ENCODE measurements at regions of chr19 and their contacts with region 1.

Region 1: DNA sequence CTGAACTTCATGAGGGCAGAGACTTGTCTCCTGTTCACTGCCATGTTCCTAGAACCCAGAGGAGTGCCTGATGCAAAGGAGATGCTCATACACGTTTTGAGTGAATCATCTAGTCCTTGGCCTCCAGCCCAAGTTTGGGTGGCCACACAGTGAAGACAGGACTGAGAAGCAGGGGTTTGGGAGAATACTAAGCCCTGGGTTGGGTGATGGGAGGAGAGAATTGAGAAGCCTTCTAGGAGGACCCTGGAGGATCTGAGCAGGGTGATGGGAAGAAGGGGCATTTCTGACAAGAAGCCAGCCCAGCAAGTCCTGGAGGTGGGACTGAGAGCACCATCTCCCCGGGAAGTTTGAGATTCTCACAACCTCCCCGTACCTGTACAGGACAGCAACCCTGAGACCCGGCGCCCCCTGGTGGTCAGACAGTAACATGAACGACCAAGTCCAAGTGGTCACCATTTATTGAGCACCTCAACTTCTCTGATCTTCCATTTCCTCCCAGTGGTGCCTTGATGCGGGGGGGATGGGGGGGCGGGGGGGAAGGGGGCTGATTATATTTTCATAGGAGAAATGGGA is 11.0 kb downstream of the CTU1 start:
- DNase-seq: peak in 1 of 2 experiments; percentile 89
- H3K4me3 ChIP-seq: no peak overlapping the region
- H3K27ac ChIP-seq: no peak overlapping the region
- H3K4me1 ChIP-seq: peaks cover 0 to 6% (median 2%) of the 10 kb centered on the region in 4 experiments; a peak in 4 of 7 replicates
- H3K27me3 ChIP-seq: no peaks in the 10 kb centered on the region; a peak in 1 of 7 replicates
- CTCF ChIP-seq: peak; percentile 69 to 74 (median 70)
- EP300 ChIP-seq: no peak
- POLR2A ChIP-seq: no peak
- RAD21 ChIP-seq: peak; percentile 55 to 66

Region 2: GRCh38 chr19:50922317-50922853 is 174.9 kb before region 1 on chr19:
- CTCF ChIA-PET with region 1: interaction called, 18 read pairs
- POLR2A ChIA-PET with region 1: interaction called, 3 read pairs
- DNase-seq: peak; percentile 59 to 87
- H3K4me3 ChIP-seq: 0 out of 8 replicates have a peak overlapping the region, but pooled peaks of 1 of the 4 experiments have one; percentile 0
- H3K27ac ChIP-seq: no peak overlapping the region
- H3K4me1 ChIP-seq: peaks cover 0 to 7% (median 5%) of the 10 kb centered on the region in 4 experiments; a peak in 5 of 7 replicates
- H3K27me3 ChIP-seq: 0 out of 7 replicates have a peak, but pooled peaks cover 0 to 2% (median 0%) of the 10 kb centered on the region in 4 experiments
- CTCF ChIP-seq: peak; percentile 83 to 98 (median 90)
- EP300 ChIP-seq: no peak
- POLR2A ChIP-seq: no peak
- RAD21 ChIP-seq: peak; percentile 96 to 98

Region 3: GRCh38 chr19:50947123-50947522 is 150.1 kb before region 1 on chr19:
- CTCF ChIA-PET with region 1: interaction called, 14 read pairs
- POLR2A ChIA-PET with region 1: no interaction called
- DNase-seq: no peak
- H3K4me3 ChIP-seq: no peak overlapping the region
- H3K27ac ChIP-seq: no peak overlapping the region
- H3K4me1 ChIP-seq: peaks cover 0 to 2% (median 0%) of the 10 kb centered on the region in 4 experiments; a peak in 1 of 7 replicates
- H3K27me3 ChIP-seq: peaks cover 0 to 3% (median 0%) of the 10 kb centered on the region in 4 experiments; a peak in 1 of 7 replicates
- CTCF ChIP-seq: no peak
- EP300 ChIP-seq: no peak
- POLR2A ChIP-seq: no peak
- RAD21 ChIP-seq: no peak

Region 4: GRCh38 chr19:51031220-51031879 is 65.9 kb before region 1 on chr19:
- CTCF ChIA-PET with region 1: interaction called, 269 read pairs
- POLR2A ChIA-PET with region 1: interaction called, 4 read pairs
- DNase-seq: no peak
- H3K4me3 ChIP-seq: no peak overlapping the region
- H3K27ac ChIP-seq: no peak overlapping the region
- H3K4me1 ChIP-seq: peaks cover 0 to 16% (median 8%) of the 10 kb centered on the region in 4 experiments; a peak in 5 of 7 replicates
- H3K27me3 ChIP-seq: no peaks in the 10 kb centered on the region; a peak in 1 of 7 replicates
- CTCF ChIP-seq: no peak
- EP300 ChIP-seq: no peak
- POLR2A ChIP-seq: no peak
- RAD21 ChIP-seq: no peak

Region 5: DNA sequence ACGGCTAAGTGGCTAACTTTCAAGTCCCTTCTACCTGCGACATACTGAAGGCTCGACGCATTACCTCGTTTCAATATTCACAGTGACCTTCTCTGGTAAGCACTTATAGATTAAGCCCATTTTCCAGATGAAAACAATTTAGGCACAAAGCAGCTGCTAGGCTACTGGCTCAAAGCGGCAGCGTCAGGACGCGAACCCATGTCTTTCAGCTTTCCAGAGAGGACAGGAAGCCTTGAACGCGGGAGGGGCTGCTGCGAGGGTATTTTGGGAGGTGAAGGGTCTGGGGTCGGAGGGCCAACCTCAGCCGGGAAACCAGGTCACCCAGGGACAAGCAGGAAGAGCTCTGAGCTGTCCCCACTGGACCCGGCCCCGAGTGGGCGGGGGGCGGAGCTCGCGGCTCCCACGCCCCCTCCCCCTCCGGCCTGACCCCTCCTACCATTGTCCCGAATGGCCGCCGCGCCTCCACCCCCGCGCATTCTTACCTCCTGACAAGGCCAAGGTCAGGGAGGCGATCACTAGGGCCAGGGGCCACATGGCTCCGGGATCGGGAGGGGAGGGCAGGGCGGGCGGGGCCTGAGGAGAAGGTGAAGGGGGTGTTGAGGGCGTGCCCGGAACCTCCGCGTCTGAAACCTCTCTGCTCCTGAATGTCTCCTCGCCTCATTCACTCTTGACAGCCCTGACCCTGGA is 32.6 kb before region 1 on chr19 and contains the start of gene KLK13:
- CTCF ChIA-PET with region 1: interaction called, 13 read pairs
- POLR2A ChIA-PET with region 1: no interaction called
- DNase-seq: peak; percentile 50 to 69
- H3K4me3 ChIP-seq: peak within 1 kb of the TSS; percentile 55 to 64 (median 62)
- H3K27ac ChIP-seq: no peak within 1 kb of the TSS
- H3K4me1 ChIP-seq: peaks cover 0 to 9% (median 1%) of the 10 kb centered on the region in 4 experiments; a peak in 4 of 7 replicates
- H3K27me3 ChIP-seq: no peaks in the 10 kb centered on the region; a peak in 2 of 7 replicates
- CTCF ChIP-seq: no peak
- EP300 ChIP-seq: no peak
- POLR2A ChIP-seq: no peak
- RAD21 ChIP-seq: no peak
- total RNA-seq, gene KLK13: 4.2 and 5.0 TPM in 2 replicates

Region 6: GRCh38 chr19:51086153-51086850 is 10.9 kb before region 1 on chr19:
- CTCF ChIA-PET with region 1: interaction called, 21 read pairs
- POLR2A ChIA-PET with region 1: no interaction called
- DNase-seq: no peak
- H3K4me3 ChIP-seq: no peak overlapping the region
- H3K27ac ChIP-seq: no peak overlapping the region
- H3K4me1 ChIP-seq: peaks cover 0 to 4% (median 2%) of the 10 kb centered on the region in 4 experiments; a peak in 2 of 7 replicates
- H3K27me3 ChIP-seq: no peaks in the 10 kb centered on the region
- CTCF ChIP-seq: no peak
- EP300 ChIP-seq: no peak
- POLR2A ChIP-seq: no peak
- RAD21 ChIP-seq: no peak

Region 7: GRCh38 chr19:51138549-51138979 is 41.3 kb after region 1 on chr19:
- CTCF ChIA-PET with region 1: no interaction called
- POLR2A ChIA-PET with region 1: no interaction called
- DNase-seq: no peak
- H3K4me3 ChIP-seq: no peak overlapping the region
- H3K27ac ChIP-seq: no peak overlapping the region
- H3K4me1 ChIP-seq: peaks cover 6 to 14% (median 8%) of the 10 kb centered on the region in 4 experiments; a peak in 5 of 7 replicates
- H3K27me3 ChIP-seq: no peaks in the 10 kb centered on the region
- CTCF ChIP-seq: no peak
- EP300 ChIP-seq: no peak
- POLR2A ChIP-seq: no peak
- RAD21 ChIP-seq: no peak

Region 8: DNA sequence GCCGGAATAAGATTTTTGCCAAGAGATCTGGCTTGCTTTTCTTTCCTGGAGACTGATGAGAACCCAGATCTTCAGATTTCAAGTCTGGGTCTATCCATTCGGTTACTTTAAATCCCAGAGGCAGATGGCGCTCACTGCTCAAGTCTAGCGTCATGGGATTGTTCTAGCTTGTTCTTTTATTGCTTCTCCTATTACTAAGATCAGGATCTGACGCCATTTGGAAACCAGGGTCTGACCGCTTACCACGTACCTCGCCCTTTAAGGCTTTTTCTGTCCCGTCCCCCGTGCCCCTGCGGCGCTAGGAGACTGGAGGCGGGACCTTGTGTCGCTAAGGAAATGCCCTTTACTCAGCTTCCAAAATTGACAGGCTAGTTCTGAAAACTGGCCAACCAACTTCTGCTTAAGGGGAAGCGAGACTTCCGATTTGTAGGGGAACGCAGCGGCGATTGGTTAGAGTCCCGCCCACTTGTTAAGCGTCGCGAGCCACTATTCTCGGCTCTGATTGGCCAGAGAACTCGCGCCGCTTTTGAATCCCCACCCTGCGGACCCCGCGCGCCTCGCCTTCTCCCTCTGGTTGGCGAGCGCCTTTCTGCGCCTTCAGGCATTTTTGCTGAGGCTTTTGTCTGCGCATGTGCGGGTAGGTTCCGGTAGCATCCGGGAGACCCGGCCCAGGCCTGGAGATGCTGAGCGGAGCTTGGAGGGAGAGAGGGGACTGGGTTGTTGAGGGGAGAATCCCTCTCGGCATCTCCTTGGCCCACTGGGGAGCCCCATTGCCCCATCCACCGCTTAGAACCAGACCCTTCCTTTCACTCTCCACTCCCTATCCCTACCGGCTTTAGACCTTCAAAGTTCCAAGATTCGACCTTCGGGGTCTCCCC is 296.9 kb after region 1 on chr19:
- CTCF ChIA-PET with region 1: no interaction called
- POLR2A ChIA-PET with region 1: no interaction called
- DNase-seq: peak; percentile 94 to 98
- H3K4me3 ChIP-seq: peak overlapping the region; percentile 67 to 91 (median 83)
- H3K27ac ChIP-seq: peak overlapping the region; percentile 86
- H3K4me1 ChIP-seq: peaks cover 0 to 7% (median under 1%) of the 10 kb centered on the region in 4 experiments; a peak in 4 of 7 replicates
- H3K27me3 ChIP-seq: no peaks in the 10 kb centered on the region
- CTCF ChIP-seq: no peak
- EP300 ChIP-seq: no peak
- POLR2A ChIP-seq: peak; percentile 75 to 85
- RAD21 ChIP-seq: no peak; a peak in 1 of 4 replicates

Measured in H1 (cell line).